Activated CD4-positive, alpha-beta memory T cell treated with anti-CD3 and anti-CD28 coated beads for 36 hours (primary cell): ENCODE measurements at regions of chr3 and their contacts with region 1.

Region 1: GRCh38 chr3:132416807-132417694 is at the start of gene DNAJC13:
- DNase-seq: peak; percentile 94
- H3K4me3 Mint-ChIP-seq: peak within 1 kb of the TSS; percentile 98
- H3K27ac Mint-ChIP-seq: peak within 1 kb of the TSS; percentile 90
- H3K4me1 Mint-ChIP-seq: peaks cover 31% of the 10 kb centered on the region
- H3K27me3 Mint-ChIP-seq: no peaks in the 10 kb centered on the region
- total RNA-seq, gene DNAJC13: 33.5 to 34.5 TPM

Region 2: DNA sequence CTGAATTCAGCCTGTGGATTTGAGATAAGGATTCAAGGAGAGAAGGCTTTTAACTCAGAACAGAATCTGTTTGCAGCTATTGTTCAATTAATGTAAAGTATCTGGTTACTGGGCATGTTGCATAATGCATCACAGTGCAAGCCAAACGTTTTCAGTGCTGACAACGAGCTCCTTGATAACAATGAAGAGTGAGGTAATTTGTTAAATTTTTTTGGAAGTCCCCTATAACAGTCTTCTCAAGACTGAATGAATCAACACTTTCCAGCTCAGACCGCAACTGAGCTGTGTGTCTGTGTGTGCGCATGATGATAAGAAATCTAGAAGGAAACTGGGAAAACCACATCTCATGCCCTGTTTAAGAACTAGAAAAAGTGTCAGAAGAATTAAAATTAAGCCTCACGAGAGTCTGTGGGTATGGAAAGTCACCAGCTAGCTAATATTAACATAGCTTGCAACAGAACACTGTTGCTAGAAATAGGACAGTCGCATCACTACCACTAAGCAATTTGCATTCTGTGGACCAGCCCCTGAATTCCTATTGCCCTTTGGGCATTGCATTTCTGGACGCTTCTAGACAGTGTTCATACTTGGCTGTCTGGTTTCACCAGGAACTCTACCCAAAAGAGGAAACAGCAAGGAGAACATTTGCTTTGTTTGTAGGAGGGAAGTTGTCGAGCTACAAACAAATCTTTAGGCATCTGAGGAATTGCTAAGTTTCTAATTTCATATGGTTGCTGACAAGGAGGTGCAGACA is 1566.8 kb before region 1 on chr3:
- CTCF ChIA-PET with region 1: no interaction called
- POLR2A ChIA-PET with region 1: no interaction called
- intact Hi-C with region 1: loop called (anchors 5 kb)
- DNase-seq: peak; percentile 76
- H3K4me3 Mint-ChIP-seq: peak overlapping the region; percentile 21
- H3K27ac Mint-ChIP-seq: peak overlapping the region; percentile 57
- H3K4me1 Mint-ChIP-seq: peaks cover 28% of the 10 kb centered on the region
- H3K27me3 Mint-ChIP-seq: peaks cover 36% of the 10 kb centered on the region

Region 3: GRCh38 chr3:131026321-131027178 is 1390.5 kb before region 1 on chr3 and contains the starts of genes ASTE1 and NEK11:
- CTCF ChIA-PET with region 1: no interaction called
- POLR2A ChIA-PET with region 1: no interaction called
- intact Hi-C with region 1: loop called (anchors 2 kb)
- DNase-seq: peak; percentile 94
- H3K4me3 Mint-ChIP-seq: peak within 1 kb of the TSS; percentile 84
- H3K27ac Mint-ChIP-seq: peak within 1 kb of the TSS; percentile 90
- H3K4me1 Mint-ChIP-seq: peaks cover 41% of the 10 kb centered on the region
- H3K27me3 Mint-ChIP-seq: no peaks in the 10 kb centered on the region
- total RNA-seq, gene ASTE1: 7.8 to 10.1 TPM
- total RNA-seq, gene NEK11: 1.2 to 1.3 TPM

Region 4: GRCh38 chr3:131381444-131382291 is 1035.4 kb before region 1 on chr3 and contains the start of gene NUDT16:
- CTCF ChIA-PET with region 1: no interaction called
- POLR2A ChIA-PET with region 1: no interaction called
- intact Hi-C with region 1: loop called (anchors 2 kb)
- DNase-seq: peak; percentile 99
- H3K4me3 Mint-ChIP-seq: peak within 1 kb of the TSS; percentile 93
- H3K27ac Mint-ChIP-seq: peak within 1 kb of the TSS; percentile 84
- H3K4me1 Mint-ChIP-seq: peaks cover 22% of the 10 kb centered on the region
- H3K27me3 Mint-ChIP-seq: no peaks in the 10 kb centered on the region
- total RNA-seq, gene NUDT16: 7.4 to 8.6 TPM

Region 5: GRCh38 chr3:131782751-131783150 is 634.3 kb before region 1 on chr3:
- CTCF ChIA-PET with region 1: no interaction called
- POLR2A ChIA-PET with region 1: no interaction called
- intact Hi-C with region 1: no loop called
- DNase-seq: no peak
- H3K4me3 Mint-ChIP-seq: no peak overlapping the region
- H3K27ac Mint-ChIP-seq: no peak overlapping the region
- H3K4me1 Mint-ChIP-seq: no peaks in the 10 kb centered on the region
- H3K27me3 Mint-ChIP-seq: peaks cover 6% of the 10 kb centered on the region

Region 6: DNA sequence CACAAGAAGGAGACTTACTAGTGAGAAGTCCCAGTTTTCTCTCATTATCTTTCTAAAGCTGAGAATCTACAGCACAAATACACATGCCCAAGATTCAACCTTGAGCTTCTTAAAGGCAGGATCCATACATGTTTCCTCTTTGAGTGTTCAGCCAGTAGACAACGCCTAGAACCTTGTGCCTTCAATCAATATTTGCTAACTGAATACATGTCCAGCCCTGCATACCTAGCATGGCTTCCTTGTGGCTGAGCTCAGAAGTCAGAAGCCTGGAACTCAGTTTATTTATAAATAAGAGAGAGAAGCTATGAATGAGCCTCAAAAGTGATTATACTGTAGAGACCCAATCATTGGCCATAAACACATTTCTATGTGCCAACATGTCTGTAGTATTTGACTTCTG is 56.3 kb before region 1 on chr3:
- CTCF ChIA-PET with region 1: no interaction called
- POLR2A ChIA-PET with region 1: no interaction called
- intact Hi-C with region 1: no loop called
- DNase-seq: no peak
- H3K4me3 Mint-ChIP-seq: no peak overlapping the region
- H3K27ac Mint-ChIP-seq: no peak overlapping the region
- H3K4me1 Mint-ChIP-seq: no peaks in the 10 kb centered on the region
- H3K27me3 Mint-ChIP-seq: peaks cover 2% of the 10 kb centered on the region

Region 7: GRCh38 chr3:132435911-132436425 is 18.9 kb after region 1 on chr3:
- CTCF ChIA-PET with region 1: interaction called, 3 read pairs
- POLR2A ChIA-PET with region 1: no interaction called
- intact Hi-C with region 1: loop called (anchors 1 kb)
- DNase-seq: no peak
- H3K4me3 Mint-ChIP-seq: no peak overlapping the region
- H3K27ac Mint-ChIP-seq: no peak overlapping the region
- H3K4me1 Mint-ChIP-seq: peaks cover 36% of the 10 kb centered on the region
- H3K27me3 Mint-ChIP-seq: no peaks in the 10 kb centered on the region

Region 8: DNA sequence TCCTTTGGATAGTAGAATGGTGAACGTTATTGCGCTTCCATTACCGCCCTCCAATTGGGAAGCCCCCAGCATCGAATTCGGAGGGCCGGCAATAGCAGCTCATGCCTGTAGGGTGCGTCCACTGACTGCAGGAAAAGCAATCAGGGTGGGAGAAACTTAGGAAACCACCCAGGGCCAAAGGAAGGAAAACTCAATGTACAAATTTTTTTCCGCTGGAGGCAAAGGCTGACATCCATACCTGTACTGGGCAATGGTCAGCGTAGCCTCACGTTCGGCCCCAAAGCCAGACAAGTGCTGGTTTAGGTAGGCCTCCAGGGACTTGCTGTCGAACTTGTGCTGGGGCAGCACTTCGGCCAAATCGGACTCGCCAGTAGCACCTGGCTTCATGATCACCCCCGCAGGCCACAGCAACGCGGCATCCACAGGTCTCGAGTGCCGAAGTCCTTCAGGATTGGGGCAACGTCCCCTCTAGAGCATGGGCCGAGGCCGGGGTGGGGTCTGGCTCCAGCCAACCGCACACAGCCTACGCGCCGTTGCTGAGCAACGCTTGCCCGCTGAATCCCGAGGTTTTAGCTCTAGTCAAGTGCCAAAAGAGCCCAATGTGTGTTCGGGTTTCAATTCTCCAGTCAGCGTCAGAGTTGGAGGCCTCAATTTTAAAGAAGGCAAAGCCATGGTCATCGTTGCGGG is 242.5 kb after region 1 on chr3 and contains the start of gene ACAD11:
- CTCF ChIA-PET with region 1: no interaction called
- POLR2A ChIA-PET with region 1: interaction called, 3 read pairs
- intact Hi-C with region 1: loop called (anchors 5 kb)
- DNase-seq: peak; percentile 58
- H3K4me3 Mint-ChIP-seq: peak within 1 kb of the TSS; percentile 93
- H3K27ac Mint-ChIP-seq: peak within 1 kb of the TSS; percentile 88
- H3K4me1 Mint-ChIP-seq: peaks cover 44% of the 10 kb centered on the region
- H3K27me3 Mint-ChIP-seq: no peaks in the 10 kb centered on the region
- total RNA-seq, gene ACAD11: 11.2 to 13.8 TPM